Aorta (tissue), 5 donors: ENCODE measurements at regions of chr4 and their contacts with region 1.

Region 1: GRCh38 chr4:105978684-105979296 is 83.5 kb downstream of the NPNT start:
- DNase-seq: peak; percentile 78 to 84
- ATAC-seq: peak; percentile 80
- H3K4me3 ChIP-seq: no peak overlapping the region
- H3K27ac ChIP-seq: peak overlapping the region; percentile 6 to 45
- H3K4me1 ChIP-seq: no peaks in the 10 kb centered on the region
- H3K27me3 ChIP-seq: no peaks in the 10 kb centered on the region

Region 2: GRCh38 chr4:105808750-105809041 is 170.1 kb before region 1 on chr4:
- intact Hi-C with region 1: loop called in 1 of 2 experiments (anchors 10 kb)
- DNase-seq: peak in 1 of 2 donors; percentile 48
- ATAC-seq: peak; percentile 52
- H3K4me3 ChIP-seq: peak overlapping the region; percentile 47 to 84
- H3K27ac ChIP-seq: peak overlapping the region in 1 of 2 donors; percentile 28
- H3K4me1 ChIP-seq: peaks cover 2 to 3% of the 10 kb centered on the region in 2 donors
- H3K27me3 ChIP-seq: no peaks in the 10 kb centered on the region